Breast epithelium (tissue), 4 donors: ENCODE measurements at regions of chr18 and their contacts with region 1.

Region 1: DNA sequence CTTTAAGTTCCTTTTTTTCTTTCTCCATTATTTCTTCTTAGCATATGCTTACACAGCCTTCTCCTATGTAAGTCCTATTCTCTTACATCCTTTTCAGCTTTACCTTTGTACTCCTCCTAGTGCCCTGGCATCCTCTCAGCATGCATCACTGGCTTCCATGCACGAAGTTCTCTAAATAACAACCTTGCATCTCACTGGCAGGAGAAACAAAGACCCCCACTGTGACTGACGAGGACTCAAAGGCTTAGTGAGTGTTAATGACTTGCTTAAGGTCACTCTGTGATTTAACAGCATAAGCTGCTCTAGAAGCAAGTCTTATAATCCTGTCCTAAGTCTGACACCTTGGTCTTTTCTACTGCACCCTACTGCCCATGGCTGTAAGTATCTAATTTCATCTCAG is 1236.0 kb upstream of the CELF4 start:
- DNase-seq: no peak
- H3K4me3 ChIP-seq: no peak overlapping the region
- H3K27ac ChIP-seq: no peak overlapping the region
- H3K4me1 ChIP-seq: no peaks in the 10 kb centered on the region
- H3K27me3 ChIP-seq: no peaks in the 10 kb centered on the region
- CTCF ChIP-seq: no peak
- POLR2A ChIP-seq: no peak

Region 2: DNA sequence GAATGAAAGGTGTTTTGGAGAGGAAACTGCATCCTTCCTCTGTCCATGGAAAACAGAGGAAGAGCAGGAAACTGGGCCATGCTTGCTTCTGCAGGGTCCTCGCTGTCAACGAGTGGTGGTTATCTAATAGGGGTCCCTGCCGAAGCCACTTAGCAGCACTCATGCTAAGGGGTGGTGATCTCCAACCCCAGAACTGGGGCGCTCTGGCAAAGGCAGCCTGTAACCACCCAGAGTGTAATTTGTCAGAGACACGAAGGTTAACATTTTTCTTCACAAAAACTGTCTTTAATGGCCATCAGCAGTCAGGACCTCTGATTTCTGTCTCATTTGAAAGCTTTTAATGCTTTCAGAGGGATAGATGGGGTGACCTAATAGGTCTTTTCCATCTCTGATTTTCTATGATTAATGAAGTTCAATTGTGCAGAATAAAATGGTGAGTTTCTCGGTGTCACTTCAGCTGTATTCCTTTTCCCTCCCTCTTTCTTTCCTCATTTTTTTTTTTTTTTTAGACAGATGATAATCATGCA is 1004.8 kb before region 1 on chr18:
- intact Hi-C with region 1: loop called (anchors 5 kb)
- DNase-seq: no peak
- H3K4me3 ChIP-seq: no peak overlapping the region
- H3K27ac ChIP-seq: no peak overlapping the region
- H3K4me1 ChIP-seq: no peaks in the 10 kb centered on the region
- H3K27me3 ChIP-seq: no peaks in the 10 kb centered on the region
- CTCF ChIP-seq: no peak
- POLR2A ChIP-seq: no peak